ENCODE measurements at regions of chr1 and their contacts with region 1.

Region 1: DNA sequence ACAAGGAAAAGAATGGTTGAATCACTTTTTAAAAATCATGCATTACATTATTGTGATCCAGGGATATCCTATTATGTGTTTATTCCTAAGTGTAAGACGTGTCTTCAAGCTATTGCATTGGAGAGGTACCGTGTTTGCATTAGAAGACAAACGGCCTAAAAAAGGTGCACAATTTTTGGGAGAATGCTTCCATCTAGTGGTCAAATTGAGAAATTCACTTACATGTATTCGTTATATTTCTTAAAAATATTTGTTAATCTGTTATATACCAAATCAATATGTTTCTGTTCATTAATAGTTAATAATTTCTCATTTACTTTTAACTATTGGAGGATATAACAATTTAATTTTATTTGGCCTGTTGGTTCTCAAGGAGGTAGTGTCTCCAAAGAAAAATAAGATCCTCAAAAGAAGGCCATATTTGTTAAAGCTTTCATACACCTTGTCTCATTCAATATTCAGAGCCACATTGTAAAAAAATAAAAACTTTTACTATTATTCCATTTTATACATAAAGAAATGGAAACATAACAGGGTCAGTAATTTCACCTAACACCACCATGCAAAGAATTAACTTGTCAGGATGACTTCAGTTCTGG is 40.5 kb upstream of the KCTD3 start:
- DNase-seq: no peak
- H3K4me3 Mint-ChIP-seq: no peak overlapping the region
- H3K27ac Mint-ChIP-seq: no peak overlapping the region
- H3K4me1 Mint-ChIP-seq: peaks cover 24% of the 10 kb centered on the region
- H3K27me3 Mint-ChIP-seq: no peaks in the 10 kb centered on the region
- CTCF ChIP-seq: peak; percentile 59

Region 2: DNA sequence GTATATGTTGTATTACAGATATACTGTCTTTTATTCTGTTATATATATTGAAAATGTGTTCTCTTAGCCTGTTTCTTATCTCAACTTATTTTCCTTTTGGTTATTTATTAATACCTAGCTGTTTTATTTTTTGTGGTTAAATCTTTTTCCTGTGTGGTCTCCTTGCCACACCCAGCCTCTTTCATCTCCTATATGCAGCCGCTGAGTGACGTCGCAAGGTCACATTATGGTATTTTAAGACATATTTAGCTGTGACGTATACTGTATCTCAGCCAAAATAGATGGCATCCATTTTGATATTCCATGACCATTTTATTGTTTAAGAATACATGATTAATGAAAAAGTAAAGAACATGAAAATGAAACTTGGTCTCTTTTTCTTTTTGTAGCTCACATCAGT is 894.6 kb before region 1 on chr1:
- CTCF ChIA-PET with region 1: interaction called, 3 read pairs
- intact Hi-C with region 1: loop called (anchors 1 kb)
- DNase-seq: no peak
- H3K4me3 Mint-ChIP-seq: no peak overlapping the region
- H3K27ac Mint-ChIP-seq: no peak overlapping the region
- H3K4me1 Mint-ChIP-seq: no peaks in the 10 kb centered on the region
- H3K27me3 Mint-ChIP-seq: no peaks in the 10 kb centered on the region
- CTCF ChIP-seq: no peak

Region 3: DNA sequence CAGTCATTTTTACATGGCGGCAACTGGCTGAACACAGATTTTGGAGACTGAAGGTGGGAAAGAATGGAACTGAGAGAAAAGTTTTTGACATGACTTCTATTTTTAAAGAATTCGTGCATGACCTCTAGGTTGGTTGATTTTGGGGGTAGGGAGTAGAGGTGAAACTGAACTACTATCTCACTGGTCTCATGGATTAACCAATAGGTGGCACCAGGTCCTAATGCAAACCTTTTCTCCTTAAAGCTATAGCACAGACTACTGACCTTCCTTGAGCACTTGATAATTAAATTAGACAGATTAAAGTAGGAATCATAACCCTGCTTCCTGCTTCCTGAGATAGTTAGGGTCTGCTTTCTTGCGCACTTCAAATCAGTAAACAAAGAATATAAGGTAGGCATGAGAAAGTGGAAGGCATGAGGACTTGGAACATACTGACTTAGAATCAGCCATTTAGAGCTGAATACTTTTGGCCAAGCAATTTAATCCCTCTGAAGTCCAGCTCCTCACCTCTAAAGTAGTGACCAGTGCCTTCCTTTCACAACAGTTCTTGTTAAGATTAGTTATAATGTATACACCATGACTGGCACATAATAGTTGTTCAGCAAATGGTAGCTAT is 717.7 kb before region 1 on chr1:
- CTCF ChIA-PET with region 1: interaction called, 8 read pairs
- intact Hi-C with region 1: loop called (anchors 1 kb)
- DNase-seq: peak; percentile 48
- H3K4me3 Mint-ChIP-seq: no peak overlapping the region
- H3K27ac Mint-ChIP-seq: no peak overlapping the region
- H3K4me1 Mint-ChIP-seq: no peaks in the 10 kb centered on the region
- H3K27me3 Mint-ChIP-seq: no peaks in the 10 kb centered on the region
- CTCF ChIP-seq: peak; percentile 60

Region 4: GRCh38 chr1:215181518-215181917 is 345.1 kb before region 1 on chr1:
- CTCF ChIA-PET with region 1: interaction called, 9 read pairs
- intact Hi-C with region 1: loop called (anchors 1 kb)
- DNase-seq: no peak
- H3K4me3 Mint-ChIP-seq: no peak overlapping the region
- H3K27ac Mint-ChIP-seq: no peak overlapping the region
- H3K4me1 Mint-ChIP-seq: no peaks in the 10 kb centered on the region
- H3K27me3 Mint-ChIP-seq: no peaks in the 10 kb centered on the region
- CTCF ChIP-seq: no peak

Region 5: GRCh38 chr1:215393481-215393880 is 133.2 kb before region 1 on chr1:
- CTCF ChIA-PET with region 1: no interaction called
- intact Hi-C with region 1: no loop called
- DNase-seq: no peak
- H3K4me3 Mint-ChIP-seq: no peak overlapping the region
- H3K27ac Mint-ChIP-seq: no peak overlapping the region
- H3K4me1 Mint-ChIP-seq: no peaks in the 10 kb centered on the region
- H3K27me3 Mint-ChIP-seq: no peaks in the 10 kb centered on the region
- CTCF ChIP-seq: no peak

Region 6: GRCh38 chr1:215606564-215607168 is 80.0 kb after region 1 on chr1:
- CTCF ChIA-PET with region 1: no interaction called
- intact Hi-C with region 1: loop called (anchors 1 kb)
- DNase-seq: no peak
- H3K4me3 Mint-ChIP-seq: no peak overlapping the region
- H3K27ac Mint-ChIP-seq: peak overlapping the region; percentile 64
- H3K4me1 Mint-ChIP-seq: peaks cover 22% of the 10 kb centered on the region
- H3K27me3 Mint-ChIP-seq: no peaks in the 10 kb centered on the region
- CTCF ChIP-seq: peak; percentile 58